Activated CD4-positive, alpha-beta T cell treated with anti-CD3 and anti-CD28 coated beads, Interleukin-2, amount 10 ng/mL, durations not matched to agents 7 days and 5 days (primary cell): ENCODE measurements at regions of chr11 and their contacts with region 1.

Region 1: DNA sequence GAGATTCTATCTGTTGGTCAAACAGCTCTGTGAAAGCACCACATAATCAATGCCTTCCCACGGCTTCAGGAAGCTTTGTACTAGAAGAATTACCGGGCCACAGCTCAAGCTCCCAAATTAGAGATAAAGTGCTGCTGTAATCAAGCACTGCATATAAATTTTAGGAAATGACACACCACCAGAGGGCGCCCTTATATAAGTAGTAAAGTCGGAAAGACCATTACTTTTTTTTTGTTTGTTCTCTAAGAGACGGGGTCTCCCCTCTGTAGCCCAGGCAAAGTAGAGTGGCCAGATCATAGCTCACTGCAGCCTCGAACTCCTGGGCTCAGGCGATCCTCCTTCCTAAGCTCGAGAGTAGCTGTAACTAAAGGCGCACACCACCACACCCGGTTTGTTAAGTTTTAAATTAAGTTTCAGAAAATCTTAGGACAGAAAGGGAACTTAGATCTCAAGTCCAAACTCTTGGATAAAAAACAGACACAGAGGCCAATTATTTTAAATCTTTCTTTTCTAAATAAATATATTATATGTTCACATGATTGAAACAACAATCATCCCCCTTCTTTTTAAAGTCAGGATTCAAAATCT is 32.6 kb downstream of the PRCP start:
- DNase-seq: peak; percentile 89
- H3K4me3 Mint-ChIP-seq: no peak overlapping the region
- H3K27ac Mint-ChIP-seq: no peak overlapping the region
- H3K4me1 Mint-ChIP-seq: peaks cover 13% of the 10 kb centered on the region
- H3K27me3 Mint-ChIP-seq: peaks cover 7% of the 10 kb centered on the region

Region 2: GRCh38 chr11:83006877-83007330 is 139.3 kb after region 1 on chr11:
- CTCF ChIA-PET with region 1: no interaction called
- POLR2A ChIA-PET with region 1: no interaction called
- DNase-seq: no peak
- H3K4me3 Mint-ChIP-seq: no peak overlapping the region
- H3K27ac Mint-ChIP-seq: peak overlapping the region; percentile 41
- H3K4me1 Mint-ChIP-seq: peaks cover 46% of the 10 kb centered on the region
- H3K27me3 Mint-ChIP-seq: no peaks in the 10 kb centered on the region

Region 3: DNA sequence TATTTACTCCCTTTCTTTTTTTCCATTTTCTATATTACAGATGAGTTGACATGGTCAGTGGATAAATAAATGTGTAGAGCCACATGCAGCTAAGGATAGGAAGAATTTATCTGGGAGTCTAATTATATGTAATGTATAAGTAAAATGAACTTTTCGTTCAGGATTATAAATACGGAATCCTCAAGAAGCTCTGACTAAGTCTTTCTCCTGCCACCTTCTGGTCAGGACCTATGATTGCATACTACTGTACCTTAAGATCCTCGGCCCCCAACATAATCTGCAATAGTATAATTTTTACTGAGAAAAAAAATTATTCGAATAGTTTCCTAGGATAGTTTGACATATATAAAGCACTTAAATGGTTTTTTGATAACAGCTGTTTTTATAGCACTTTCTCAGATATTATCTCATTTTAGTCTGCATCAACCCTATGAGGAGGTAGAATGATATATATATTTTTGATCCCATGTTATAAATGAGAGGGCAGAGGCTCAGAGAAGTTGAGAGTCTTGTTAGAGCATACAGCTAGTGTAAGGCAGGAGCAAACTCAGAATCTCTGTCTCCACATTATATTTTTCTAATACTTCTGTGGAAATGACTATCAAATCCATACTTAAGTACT is 382.5 kb after region 1 on chr11:
- CTCF ChIA-PET with region 1: interaction called, 15 read pairs
- POLR2A ChIA-PET with region 1: no interaction called
- DNase-seq: peak; percentile 40
- H3K4me3 Mint-ChIP-seq: no peak overlapping the region
- H3K27ac Mint-ChIP-seq: no peak overlapping the region
- H3K4me1 Mint-ChIP-seq: peaks cover 6% of the 10 kb centered on the region
- H3K27me3 Mint-ChIP-seq: peaks cover 2% of the 10 kb centered on the region